GM10248 (cell line): ENCODE measurements at regions of chr15 and their contacts with region 1.

Region 1: GRCh38 chr15:70664494-70664893 is 98.9 kb downstream of the UACA start:
- DNase-seq: no peak
- CTCF ChIP-seq: no peak

Region 2: GRCh38 chr15:70271422-70272088 is 392.9 kb before region 1 on chr15:
- CTCF ChIA-PET with region 1: no interaction called
- POLR2A ChIA-PET with region 1: no interaction called
- DNase-seq: no peak
- CTCF ChIP-seq: no peak

Region 3: DNA sequence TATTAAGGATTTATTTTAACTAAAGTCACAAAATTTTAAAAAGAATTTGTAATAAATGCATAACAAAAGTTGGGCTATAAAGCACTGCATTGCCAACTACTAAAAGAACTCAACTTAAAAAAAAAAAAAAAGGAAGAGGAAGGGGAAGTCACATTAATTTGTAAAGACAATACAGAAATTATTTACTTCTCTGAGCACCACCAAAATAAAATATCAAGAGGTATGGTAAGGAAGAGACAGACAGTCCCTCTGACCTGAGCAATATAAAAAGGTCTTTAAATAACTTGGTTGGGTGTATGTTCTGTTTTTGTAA is 15.4 kb after region 1 on chr15:
- CTCF ChIA-PET with region 1: interaction called, 14 read pairs
- POLR2A ChIA-PET with region 1: no interaction called
- DNase-seq: no peak
- CTCF ChIP-seq: no peak

Region 4: DNA sequence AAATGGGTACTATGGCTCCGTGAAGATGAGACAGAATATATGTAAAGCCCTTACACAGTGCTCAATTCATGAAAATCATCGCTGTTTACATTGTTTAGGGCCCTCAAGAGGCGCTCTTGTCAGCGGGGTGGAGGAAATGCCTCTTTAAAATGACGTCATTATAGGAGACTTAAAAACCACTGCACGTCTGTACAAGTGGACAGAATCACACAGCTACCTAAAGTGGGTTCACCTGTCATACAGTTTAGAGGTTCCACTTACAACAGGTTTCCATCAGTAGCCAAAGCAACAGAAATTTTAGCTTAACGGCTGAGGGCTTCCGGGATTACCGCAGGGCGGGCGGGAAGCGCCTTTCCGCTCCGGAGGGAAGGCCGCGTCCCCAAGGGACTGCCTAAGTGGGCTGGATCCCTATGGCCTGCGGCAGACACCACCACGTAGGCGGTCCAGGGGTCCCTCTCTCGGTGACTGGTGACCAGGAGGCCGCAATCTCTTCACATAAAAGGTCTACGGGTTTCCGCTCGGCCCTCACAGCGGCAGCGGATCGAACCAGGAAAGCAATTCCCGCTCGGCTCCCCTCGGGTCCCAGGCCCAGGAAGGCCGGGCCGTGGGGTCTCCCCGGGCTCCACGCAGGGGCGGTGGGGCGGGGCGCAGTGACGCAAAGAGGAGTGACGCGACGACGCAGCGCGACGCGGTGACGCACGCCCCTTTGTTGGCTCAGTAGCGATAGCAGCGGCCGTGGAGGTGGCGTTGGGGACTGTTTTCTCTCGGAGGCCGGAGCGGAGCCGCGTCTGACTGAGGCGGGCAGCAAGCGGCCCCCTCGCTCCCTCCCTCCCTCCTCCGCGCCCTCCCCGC is 1809.3 kb after region 1 on chr15 and contains the start of gene ARIH1:
- CTCF ChIA-PET with region 1: no interaction called
- POLR2A ChIA-PET with region 1: interaction called, 10 read pairs
- DNase-seq: peak; percentile 92
- CTCF ChIP-seq: peak; percentile 15